ENCODE measurements at regions of chr16 and their contacts with region 1.

Region 1: GRCh38 chr16:2147981-2148671 is at the start of gene RAB26:
- DNase-seq: peak; percentile 91 to 98
- H3K4me3 ChIP-seq: peak within 1 kb of the TSS; percentile 68
- H3K27ac ChIP-seq: peak within 1 kb of the TSS; percentile 37; the same call in 1 of the 2 replicates
- H3K4me1 ChIP-seq: peaks cover 34% of the 10 kb centered on the region
- H3K27me3 ChIP-seq: no peaks in the 10 kb centered on the region
- CTCF ChIP-seq: no peak
- total RNA-seq, gene RAB26: 29.5 and 31.3 TPM in 2 replicates

Region 2: GRCh38 chr16:1782352-1783091 is 365.6 kb before region 1 on chr16 and contains the starts of genes NUBP2 and SPSB3:
- CTCF ChIA-PET with region 1: no interaction called
- POLR2A ChIA-PET with region 1: no interaction called
- intact Hi-C with region 1: loop called (anchors 5 kb)
- DNase-seq: peak; percentile 99 to 100
- H3K4me3 ChIP-seq: peak within 1 kb of the TSS; percentile 93
- H3K27ac ChIP-seq: peak within 1 kb of the TSS; percentile 50; the same call in 1 of the 2 replicates
- H3K4me1 ChIP-seq: peaks cover 15% of the 10 kb centered on the region
- H3K27me3 ChIP-seq: no peaks in the 10 kb centered on the region
- CTCF ChIP-seq: no peak
- total RNA-seq, gene NUBP2: 80.0 and 103 TPM in 2 replicates
- total RNA-seq, gene SPSB3: 58.2 and 86.6 TPM in 2 replicates

Region 3: DNA sequence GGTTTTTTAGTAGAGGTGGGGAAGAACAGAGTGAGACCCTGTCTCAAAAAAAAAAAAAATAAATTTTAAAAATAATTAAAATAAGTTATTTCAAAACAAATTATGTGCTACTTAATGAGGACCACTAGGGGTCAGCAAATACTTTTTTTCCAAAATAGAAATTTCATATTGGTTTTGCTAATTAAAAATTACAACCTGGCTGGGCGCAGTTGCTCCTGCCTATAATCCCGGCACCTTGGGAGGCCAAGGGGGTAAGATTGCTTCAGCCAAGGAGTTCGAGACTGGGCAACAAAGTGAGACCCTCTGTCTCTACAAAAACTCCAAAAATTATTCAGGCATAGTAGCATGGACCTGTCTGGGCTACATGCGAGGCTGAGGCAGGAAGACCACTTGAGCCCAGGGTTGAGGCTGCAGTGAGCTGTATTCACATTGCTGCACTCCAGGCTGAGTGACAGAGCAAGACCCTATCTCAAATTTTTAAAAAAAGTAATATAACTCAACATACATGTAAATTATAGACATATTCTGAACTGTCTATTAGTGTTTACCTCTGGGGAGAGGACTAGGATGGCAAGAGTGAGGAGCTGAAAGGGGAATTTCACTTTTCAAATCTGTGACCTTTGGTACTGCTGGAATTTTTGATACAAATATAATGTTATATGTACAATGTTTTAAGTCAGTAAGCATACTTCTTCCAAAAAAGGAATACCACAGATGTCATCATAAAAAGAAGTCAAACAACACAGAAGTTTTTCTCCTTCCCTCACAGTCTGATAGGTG is 284.3 kb before region 1 on chr16:
- CTCF ChIA-PET with region 1: no interaction called
- POLR2A ChIA-PET with region 1: no interaction called
- intact Hi-C with region 1: loop called (anchors 10 kb)
- DNase-seq: peak in 1 of 2 experiments; percentile 11
- H3K4me3 ChIP-seq: no peak overlapping the region
- H3K27ac ChIP-seq: no peak overlapping the region
- H3K4me1 ChIP-seq: 0 out of 2 replicates have a peak, but pooled peaks cover under 1% of the 10 kb centered on the region
- H3K27me3 ChIP-seq: peaks cover 2% of the 10 kb centered on the region; the same call in 1 of the 2 replicates
- CTCF ChIP-seq: peak; percentile 80

Region 4: GRCh38 chr16:1983544-1984346 is 164.4 kb before region 1 on chr16 and contains the start of gene GFER:
- CTCF ChIA-PET with region 1: interaction called, 3 read pairs
- POLR2A ChIA-PET with region 1: no interaction called
- intact Hi-C with region 1: loop called (anchors 5 kb)
- DNase-seq: peak; percentile 73 to 98
- H3K4me3 ChIP-seq: peak within 1 kb of the TSS; percentile 93
- H3K27ac ChIP-seq: no peak within 1 kb of the TSS
- H3K4me1 ChIP-seq: peaks cover 67% of the 10 kb centered on the region
- H3K27me3 ChIP-seq: no peaks in the 10 kb centered on the region
- CTCF ChIP-seq: no peak; the same call in 1 of the 2 replicates
- total RNA-seq, gene GFER: 59.7 and 63.8 TPM in 2 replicates

Region 5: DNA sequence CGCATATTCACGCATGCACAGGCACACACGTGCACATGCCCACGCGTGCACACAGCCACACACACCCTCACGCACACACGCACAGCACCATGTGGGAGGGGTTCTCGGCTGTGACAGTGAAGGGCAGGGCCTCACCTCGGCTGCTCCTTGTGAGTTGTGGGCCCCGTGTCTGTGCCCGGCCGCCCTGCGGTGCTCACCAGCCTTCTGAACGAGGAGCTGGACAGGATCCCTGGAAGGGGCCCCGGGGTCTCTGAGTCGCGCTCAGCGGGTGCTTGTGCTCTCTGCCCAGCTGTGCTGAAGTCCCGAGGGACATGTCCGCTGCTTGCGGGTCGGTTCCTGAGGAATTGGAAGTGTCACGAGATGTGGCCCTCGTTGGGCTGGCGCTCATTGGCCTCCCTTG is 84.3 kb before region 1 on chr16:
- CTCF ChIA-PET with region 1: no interaction called
- POLR2A ChIA-PET with region 1: interaction called, 11 read pairs
- intact Hi-C with region 1: no loop called
- DNase-seq: no peak
- H3K4me3 ChIP-seq: no peak overlapping the region
- H3K27ac ChIP-seq: no peak overlapping the region
- H3K4me1 ChIP-seq: no peaks in the 10 kb centered on the region
- H3K27me3 ChIP-seq: no peaks in the 10 kb centered on the region
- CTCF ChIP-seq: no peak

Region 6: GRCh38 chr16:2090777-2091546 is 57.2 kb before region 1 on chr16:
- CTCF ChIA-PET with region 1: interaction called, 3 read pairs
- POLR2A ChIA-PET with region 1: no interaction called
- intact Hi-C with region 1: loop called (anchors 5 kb)
- DNase-seq: peak; percentile 62 to 98
- H3K4me3 ChIP-seq: peak overlapping the region; percentile 45; the same call in 1 of the 2 replicates
- H3K27ac ChIP-seq: no peak overlapping the region
- H3K4me1 ChIP-seq: no peaks in the 10 kb centered on the region; the same call in 1 of the 2 replicates
- H3K27me3 ChIP-seq: no peaks in the 10 kb centered on the region
- CTCF ChIP-seq: peak; percentile 55; the same call in 1 of the 2 replicates

Region 7: DNA sequence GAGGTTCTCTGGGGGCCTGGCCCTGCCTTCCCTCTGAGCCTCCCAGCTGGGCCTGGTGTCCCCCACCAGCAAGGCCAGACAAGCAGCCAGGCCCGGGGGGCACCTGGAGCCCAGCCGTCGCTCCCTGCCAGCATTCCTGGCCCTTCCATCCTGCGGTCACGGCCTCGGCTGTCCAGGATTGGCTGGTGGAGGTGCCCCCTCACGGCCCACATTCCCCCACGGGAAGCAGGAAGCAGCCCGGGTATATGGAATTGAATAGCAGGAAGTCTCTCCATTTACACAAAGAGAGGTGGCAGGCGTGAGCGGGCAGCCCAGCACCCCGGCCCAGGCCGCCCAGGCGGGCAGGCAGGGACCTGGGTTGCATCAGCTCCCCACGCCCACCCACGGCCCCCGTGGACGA is 22.0 kb after region 1 on chr16:
- CTCF ChIA-PET with region 1: no interaction called
- POLR2A ChIA-PET with region 1: no interaction called
- intact Hi-C with region 1: no loop called
- DNase-seq: no peak
- H3K4me3 ChIP-seq: no peak overlapping the region
- H3K27ac ChIP-seq: no peak overlapping the region
- H3K4me1 ChIP-seq: peaks cover 9% of the 10 kb centered on the region
- H3K27me3 ChIP-seq: no peaks in the 10 kb centered on the region
- CTCF ChIP-seq: no peak